ENCODE measurements at regions of chr3 and their contacts with region 1.

Region 1: DNA sequence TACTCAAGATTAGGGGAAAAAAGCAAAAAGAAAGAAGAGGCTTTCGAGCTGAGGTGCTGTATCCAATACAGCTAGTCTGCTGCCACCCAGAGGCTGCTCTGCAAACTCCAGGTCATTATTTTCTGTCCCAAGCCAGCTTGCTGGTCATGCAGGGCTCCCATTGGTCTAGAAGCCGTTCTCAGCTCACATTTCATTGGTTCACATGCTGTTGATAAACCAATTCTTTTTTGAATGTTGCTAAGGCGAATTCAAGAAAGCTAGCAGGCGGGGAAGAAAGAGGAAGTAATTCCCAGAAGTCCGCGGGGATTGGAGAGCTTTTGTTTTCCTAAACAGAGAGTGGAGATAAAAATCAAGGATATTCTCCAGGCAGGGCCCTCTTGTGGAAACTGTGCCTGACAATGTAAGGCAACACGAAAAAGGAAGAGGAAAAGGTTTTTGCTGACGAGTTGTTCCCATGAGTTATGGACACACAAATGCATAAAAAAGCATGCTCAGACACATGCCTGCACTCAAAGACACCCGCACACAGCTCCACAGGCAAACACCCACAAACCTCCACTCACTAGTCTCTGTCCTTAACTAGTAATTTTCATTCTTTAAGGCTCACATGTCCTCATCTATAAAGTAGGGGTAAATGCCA is 33.4 kb downstream of the FSTL1 start:
- DNase-seq: peak; percentile 94 to 96
- H3K4me3 ChIP-seq: peak overlapping the region; percentile 30
- H3K4me3 Mint-ChIP-seq: peak overlapping the region; percentile 78
- H3K27ac Mint-ChIP-seq: peak overlapping the region; percentile 90
- H3K4me1 ChIP-seq: peaks cover 14% of the 10 kb centered on the region
- H3K4me1 Mint-ChIP-seq: no peaks in the 10 kb centered on the region
- H3K27me3 ChIP-seq: no peaks in the 10 kb centered on the region
- H3K27me3 Mint-ChIP-seq: no peaks in the 10 kb centered on the region
- CTCF ChIP-seq: peak; percentile 69 to 86

Region 2: DNA sequence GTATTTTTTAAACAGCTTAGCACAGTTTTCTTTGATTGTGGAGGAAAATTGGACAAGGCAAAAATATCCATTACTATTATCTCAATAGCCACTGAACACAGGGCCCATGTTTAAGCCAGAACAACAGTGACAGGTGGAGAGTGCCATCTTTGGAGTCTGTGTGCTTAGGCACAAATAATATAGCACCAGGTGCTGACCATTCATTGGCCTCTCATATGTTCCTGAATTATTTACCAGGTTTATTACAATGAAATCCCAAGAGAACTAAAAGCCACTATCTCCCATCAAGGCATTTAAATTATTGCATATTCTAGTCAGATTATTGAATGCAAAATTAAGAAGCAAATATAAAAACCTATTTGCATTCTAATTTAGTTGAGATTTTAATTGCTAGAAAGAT is 172.0 kb before region 1 on chr3:
- CTCF ChIA-PET with region 1: interaction called, 62 read pairs
- POLR2A ChIA-PET with region 1: interaction called, 6 read pairs
- intact Hi-C with region 1: loop called (anchors 1 kb)
- DNase-seq: no peak
- H3K4me3 ChIP-seq: no peak overlapping the region
- H3K4me3 Mint-ChIP-seq: no peak overlapping the region
- H3K27ac Mint-ChIP-seq: no peak overlapping the region
- H3K4me1 ChIP-seq: no peaks in the 10 kb centered on the region
- H3K4me1 Mint-ChIP-seq: no peaks in the 10 kb centered on the region
- H3K27me3 ChIP-seq: no peaks in the 10 kb centered on the region
- H3K27me3 Mint-ChIP-seq: no peaks in the 10 kb centered on the region
- CTCF ChIP-seq: no peak

Region 3: GRCh38 chr3:120432150-120432860 is 14.9 kb after region 1 on chr3:
- CTCF ChIA-PET with region 1: interaction called, 10 read pairs
- POLR2A ChIA-PET with region 1: no interaction called
- intact Hi-C with region 1: no loop called
- DNase-seq: peak; percentile 18 to 43
- H3K4me3 ChIP-seq: no peak overlapping the region
- H3K4me3 Mint-ChIP-seq: no peak overlapping the region
- H3K27ac Mint-ChIP-seq: no peak overlapping the region
- H3K4me1 ChIP-seq: peaks cover 21% of the 10 kb centered on the region
- H3K4me1 Mint-ChIP-seq: peaks cover 25% of the 10 kb centered on the region
- H3K27me3 ChIP-seq: no peaks in the 10 kb centered on the region
- H3K27me3 Mint-ChIP-seq: no peaks in the 10 kb centered on the region
- CTCF ChIP-seq: no peak

Region 4: GRCh38 chr3:120498556-120499346 is 81.4 kb after region 1 on chr3:
- CTCF ChIA-PET with region 1: interaction called, 6 read pairs
- POLR2A ChIA-PET with region 1: no interaction called
- intact Hi-C with region 1: loop called (anchors 2 kb)
- DNase-seq: peak; percentile 31 to 37
- H3K4me3 ChIP-seq: no peak overlapping the region
- H3K4me3 Mint-ChIP-seq: no peak overlapping the region
- H3K27ac Mint-ChIP-seq: no peak overlapping the region
- H3K4me1 ChIP-seq: peaks cover 9% of the 10 kb centered on the region
- H3K4me1 Mint-ChIP-seq: peaks cover 7% of the 10 kb centered on the region
- H3K27me3 ChIP-seq: no peaks in the 10 kb centered on the region
- H3K27me3 Mint-ChIP-seq: no peaks in the 10 kb centered on the region
- CTCF ChIP-seq: no peak

Region 5: GRCh38 chr3:120558771-120559241 is 141.4 kb after region 1 on chr3:
- CTCF ChIA-PET with region 1: interaction called, 97 read pairs
- POLR2A ChIA-PET with region 1: interaction called, 5 read pairs
- intact Hi-C with region 1: loop called (anchors 1 kb)
- DNase-seq: peak; percentile 72 to 85
- H3K4me3 ChIP-seq: peak overlapping the region; percentile 16
- H3K4me3 Mint-ChIP-seq: peak overlapping the region; percentile 68
- H3K27ac Mint-ChIP-seq: peak overlapping the region; percentile 56
- H3K4me1 ChIP-seq: no peaks in the 10 kb centered on the region
- H3K4me1 Mint-ChIP-seq: peaks cover 14% of the 10 kb centered on the region
- H3K27me3 ChIP-seq: no peaks in the 10 kb centered on the region
- H3K27me3 Mint-ChIP-seq: peaks cover 3% of the 10 kb centered on the region
- CTCF ChIP-seq: peak; percentile 86 to 91

Measured in Caco-2 (cell line).